ENCODE measurements at regions of chr16 and their contacts with region 1.

Region 1: GRCh38 chr16:83356266-83356665 is 451.5 kb upstream of the HSBP1 start:
- DNase-seq: no peak
- H3K4me3 ChIP-seq: no peak overlapping the region
- CTCF ChIP-seq: peak; percentile 65

Region 2: DNA sequence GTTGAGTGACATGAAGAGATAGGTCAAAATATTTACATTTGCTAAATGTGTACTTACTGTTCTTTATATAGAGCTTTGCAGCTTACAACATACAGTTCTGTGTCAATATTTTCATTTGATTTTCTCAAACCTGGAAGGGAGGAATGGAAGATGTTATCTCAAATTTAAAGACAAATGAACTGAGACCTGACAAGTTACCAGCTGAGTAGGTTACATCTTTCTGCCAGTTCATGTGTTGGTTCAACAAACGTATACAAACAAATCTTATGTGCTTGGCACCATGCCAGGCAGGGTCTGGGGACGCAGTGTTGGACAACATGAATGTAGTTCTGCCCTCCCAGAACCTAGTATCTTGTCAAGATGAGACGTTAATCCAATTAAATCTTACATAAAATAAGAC is 56.0 kb before region 1 on chr16:
- CTCF ChIA-PET with region 1: interaction called, 10 read pairs
- POLR2A ChIA-PET with region 1: no interaction called
- DNase-seq: no peak
- H3K4me3 ChIP-seq: no peak overlapping the region
- CTCF ChIP-seq: no peak

Region 3: DNA sequence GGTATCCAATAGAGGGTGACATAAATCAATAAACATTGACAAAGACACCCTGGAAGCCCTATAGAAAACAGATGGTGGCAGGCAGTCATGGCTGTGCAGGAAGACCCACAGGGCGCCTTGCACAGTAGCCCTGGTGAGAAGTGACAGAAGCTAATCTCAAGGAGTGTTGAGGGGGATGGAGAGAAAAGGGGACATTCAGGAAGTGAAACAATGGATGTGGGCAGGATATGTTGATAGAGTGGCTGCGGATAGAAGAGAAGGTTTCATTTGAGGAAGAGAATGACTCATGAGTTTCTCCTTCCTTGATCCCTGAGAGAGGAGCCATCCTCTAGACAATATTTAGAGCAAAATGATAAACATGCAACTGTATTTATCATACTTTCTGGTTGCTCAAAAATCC is 17.3 kb before region 1 on chr16:
- CTCF ChIA-PET with region 1: interaction called, 30 read pairs
- POLR2A ChIA-PET with region 1: no interaction called
- DNase-seq: no peak
- H3K4me3 ChIP-seq: no peak overlapping the region
- CTCF ChIP-seq: no peak

Region 4: GRCh38 chr16:83344014-83344413 is 12.3 kb before region 1 on chr16:
- CTCF ChIA-PET with region 1: interaction called, 30 read pairs
- POLR2A ChIA-PET with region 1: no interaction called
- DNase-seq: peak; percentile 75
- H3K4me3 ChIP-seq: no peak overlapping the region
- CTCF ChIP-seq: no peak

Region 5: GRCh38 chr16:83374979-83375378 is 18.7 kb after region 1 on chr16:
- CTCF ChIA-PET with region 1: interaction called, 22 read pairs
- POLR2A ChIA-PET with region 1: no interaction called
- DNase-seq: no peak
- H3K4me3 ChIP-seq: no peak overlapping the region
- CTCF ChIP-seq: no peak

Region 6: DNA sequence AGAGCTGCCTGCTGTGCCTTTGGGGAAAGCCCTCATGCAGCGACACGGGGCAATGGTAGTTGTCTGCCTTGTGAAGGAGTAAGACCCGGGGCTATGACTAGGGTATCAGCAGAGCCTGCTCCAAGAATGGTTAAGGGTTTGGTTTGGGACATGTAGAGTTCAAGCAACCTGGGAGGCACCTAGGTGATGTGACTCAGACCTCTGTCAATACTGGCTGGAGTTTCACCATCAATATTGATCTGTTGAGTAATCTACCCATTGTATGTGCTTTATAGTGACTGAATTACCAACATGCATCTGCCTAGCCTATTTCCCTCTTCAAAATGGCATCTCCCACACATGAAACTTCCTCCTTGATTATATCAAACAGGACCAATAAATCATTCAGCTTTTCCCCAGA is 53.1 kb after region 1 on chr16:
- CTCF ChIA-PET with region 1: no interaction called
- POLR2A ChIA-PET with region 1: no interaction called
- DNase-seq: no peak
- H3K4me3 ChIP-seq: no peak overlapping the region
- CTCF ChIP-seq: no peak

Region 7: DNA sequence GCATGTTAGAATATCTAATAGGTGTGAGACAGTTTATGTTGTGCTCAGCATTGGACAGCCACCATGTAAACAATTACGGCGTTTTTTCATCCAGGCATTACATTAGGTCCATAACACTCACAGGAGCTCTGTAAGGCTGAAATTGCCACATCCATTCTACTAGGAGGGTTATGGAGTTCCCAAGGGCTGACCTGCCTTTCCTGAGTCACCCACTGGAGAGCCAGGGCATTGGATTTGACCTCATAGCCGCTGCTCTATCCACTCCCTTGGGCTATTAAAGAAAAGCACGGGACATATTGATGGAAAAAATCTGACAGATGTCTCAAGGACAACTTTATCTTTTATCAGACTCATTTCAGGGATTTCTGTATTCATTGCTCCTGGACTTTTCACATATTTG is 145.2 kb after region 1 on chr16:
- CTCF ChIA-PET with region 1: no interaction called
- POLR2A ChIA-PET with region 1: no interaction called
- DNase-seq: no peak
- H3K4me3 ChIP-seq: no peak overlapping the region
- CTCF ChIP-seq: no peak

Measured in AG04449 (cell line).